Ascending aorta (tissue), 2 donors: ENCODE measurements at regions of chr17 and their contacts with region 1.

Region 1: GRCh38 chr17:41665566-41666236 is 23.0 kb upstream of the EIF1 start:
- DNase-seq: peak; percentile 38 to 93
- H3K4me3 ChIP-seq: peak overlapping the region; percentile 52 to 72
- H3K27ac ChIP-seq: peak overlapping the region; percentile 82 to 85
- H3K4me1 ChIP-seq: peaks cover 0 to 14% of the 10 kb centered on the region in 2 donors
- H3K27me3 ChIP-seq: no peaks in the 10 kb centered on the region
- CTCF ChIP-seq: peak; percentile 94 to 96 (median 95)

Region 2: DNA sequence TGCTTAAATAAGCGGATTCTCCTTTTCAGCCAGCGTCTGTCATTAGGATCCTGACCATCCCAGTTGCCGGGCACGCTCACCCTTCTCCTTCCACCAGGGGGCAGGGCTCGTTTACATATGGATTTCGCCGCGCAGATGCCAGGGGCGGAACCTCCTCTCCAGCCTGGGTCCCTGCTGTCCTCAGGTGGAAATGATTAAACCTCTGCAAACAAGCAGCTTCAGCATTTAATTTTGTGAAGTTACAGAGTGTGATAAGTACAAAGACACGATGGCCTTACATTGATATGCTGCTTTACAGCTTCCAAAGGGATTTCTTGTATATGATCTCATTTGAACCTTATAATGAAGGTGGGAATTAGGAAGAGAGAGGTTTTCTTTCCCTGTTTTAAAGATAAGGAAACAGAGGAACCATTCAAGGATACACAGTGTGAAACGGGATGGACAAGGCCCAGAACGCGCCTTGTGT is 862.1 kb before region 1 on chr17:
- intact Hi-C with region 1: loop called (anchors 1 kb)
- DNase-seq: peak; percentile 19 to 88
- H3K4me3 ChIP-seq: no peak overlapping the region
- H3K27ac ChIP-seq: no peak overlapping the region
- H3K4me1 ChIP-seq: no peaks in the 10 kb centered on the region
- H3K27me3 ChIP-seq: no peaks in the 10 kb centered on the region
- CTCF ChIP-seq: peak; percentile 74 to 84 (median 76)

Region 3: DNA sequence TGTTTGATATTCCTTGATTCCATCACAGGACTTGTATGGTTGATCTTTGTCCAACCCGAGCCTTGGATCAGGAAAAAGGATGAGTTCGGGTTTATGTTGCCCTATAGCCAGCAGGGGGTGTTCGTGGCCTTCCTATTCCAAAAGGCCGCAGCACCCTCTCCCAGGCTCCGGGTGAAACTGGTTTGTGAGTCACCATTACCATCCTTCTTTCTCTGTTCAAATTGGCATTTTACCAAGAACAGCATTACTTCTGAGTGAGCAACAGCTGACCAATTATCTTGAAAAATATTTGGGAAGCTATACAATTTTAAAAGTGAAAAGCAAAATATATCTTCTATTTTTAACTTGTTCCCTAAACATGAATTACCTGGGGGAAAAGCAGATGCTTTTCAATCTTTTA is 756.4 kb before region 1 on chr17:
- intact Hi-C with region 1: loop called (anchors 1 kb)
- DNase-seq: peak; percentile 20 to 92
- H3K4me3 ChIP-seq: no peak overlapping the region
- H3K27ac ChIP-seq: no peak overlapping the region
- H3K4me1 ChIP-seq: peaks cover 11 to 16% of the 10 kb centered on the region in 2 donors
- H3K27me3 ChIP-seq: no peaks in the 10 kb centered on the region
- CTCF ChIP-seq: peak; percentile 70 to 77 (median 73)

Region 4: DNA sequence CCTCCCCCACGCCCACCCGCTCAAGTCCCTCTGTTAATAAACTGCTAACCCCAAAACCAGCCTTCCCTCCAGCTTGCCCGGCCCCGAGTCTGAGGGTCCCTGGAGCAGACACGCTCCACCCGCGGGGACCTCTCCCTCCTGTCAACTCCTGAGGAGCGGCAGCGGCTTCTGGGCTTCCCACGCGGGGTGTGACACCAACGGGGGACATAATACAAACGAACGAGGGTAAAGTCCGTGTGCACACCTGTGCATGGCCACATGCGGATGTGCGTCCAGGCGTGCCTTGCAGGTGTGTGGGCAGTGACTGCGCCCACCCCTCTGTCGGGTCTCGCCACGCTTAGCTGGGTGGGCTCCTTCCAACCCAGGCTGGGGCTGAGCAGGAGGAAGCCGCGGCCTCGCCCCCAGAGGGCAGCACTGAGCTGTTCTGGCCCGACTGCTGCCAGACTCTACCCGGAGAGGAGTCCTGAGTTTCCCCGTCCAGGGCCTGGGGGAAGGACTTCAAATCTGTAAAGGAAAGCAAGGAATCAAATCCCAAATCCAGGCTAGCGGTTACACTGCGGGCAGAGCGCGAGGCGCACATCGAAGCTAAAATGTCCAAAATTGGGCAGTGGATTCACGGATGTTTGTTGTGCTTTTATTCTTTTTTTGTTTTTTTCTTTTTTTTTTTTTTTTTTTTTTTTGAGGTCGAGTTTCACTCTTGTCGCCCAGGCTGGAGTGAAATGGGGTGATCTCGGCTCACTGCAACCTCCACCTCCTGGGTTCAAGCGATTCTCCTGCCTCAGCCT is 17.1 kb before region 1 on chr17:
- intact Hi-C with region 1: loop called (anchors 1 kb)
- DNase-seq: peak in 1 of 2 donors; percentile 92
- H3K4me3 ChIP-seq: peak overlapping the region; percentile 31 to 56
- H3K27ac ChIP-seq: peak overlapping the region; percentile 35 to 51
- H3K4me1 ChIP-seq: peaks cover 7 to 21% of the 10 kb centered on the region in 2 donors
- H3K27me3 ChIP-seq: no peaks in the 10 kb centered on the region
- CTCF ChIP-seq: peak; percentile 88 to 96 (median 95)

Region 5: GRCh38 chr17:41717408-41718286 is 51.9 kb after region 1 on chr17:
- intact Hi-C with region 1: no loop called
- DNase-seq: no peak
- H3K4me3 ChIP-seq: no peak overlapping the region
- H3K27ac ChIP-seq: no peak overlapping the region
- H3K4me1 ChIP-seq: no peaks in the 10 kb centered on the region
- H3K27me3 ChIP-seq: no peaks in the 10 kb centered on the region
- CTCF ChIP-seq: no peak